Panc1 (cell line): ENCODE measurements at regions of chrX and their contacts with region 1.

Region 1: DNA sequence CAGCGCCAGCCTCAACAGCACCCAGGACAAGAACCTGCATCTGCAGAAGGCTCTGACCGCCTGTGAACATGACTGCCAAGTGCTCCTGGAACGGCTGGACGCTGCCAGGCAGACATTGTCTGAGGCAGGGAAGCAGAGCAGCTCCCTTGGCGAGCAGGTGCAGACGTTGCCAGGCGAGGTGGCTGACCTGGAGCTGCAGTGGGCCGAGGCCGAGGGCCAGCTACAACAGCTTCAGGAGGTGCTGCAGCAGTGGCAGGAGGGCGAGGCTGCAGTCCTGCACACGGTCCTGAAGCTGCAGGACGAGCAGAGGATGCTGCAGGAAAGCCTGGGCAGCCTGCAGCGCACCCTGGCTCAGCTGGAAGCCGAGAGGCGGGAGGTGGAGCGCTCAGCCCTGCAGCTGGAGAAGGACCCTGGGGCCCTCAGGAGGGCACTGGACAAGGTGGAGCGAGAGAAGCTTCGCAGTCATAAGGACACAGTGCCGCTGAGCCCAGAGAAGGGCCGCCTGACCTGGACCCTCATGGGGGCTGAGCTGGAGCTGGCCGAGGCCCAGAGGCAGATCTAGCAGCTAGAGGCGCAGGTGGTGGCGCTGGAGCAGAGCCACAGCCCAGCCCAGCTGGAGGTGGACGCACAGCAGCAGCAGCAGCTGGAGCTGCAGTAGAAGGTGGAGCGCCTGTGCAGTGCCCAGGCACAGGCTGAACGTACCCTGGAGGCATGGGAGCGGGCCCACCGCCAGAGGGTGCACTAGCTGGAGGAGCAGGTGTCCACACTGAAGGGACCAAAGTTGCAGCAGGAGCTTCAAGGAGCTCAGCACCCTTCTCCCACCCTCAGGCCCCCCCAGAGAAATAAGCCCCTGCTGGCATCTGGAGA is 16.4 kb downstream of the SMIM10L2A start:
- DNase-seq: no peak
- ATAC-seq: peak; percentile 85
- H3K4me3 ChIP-seq: no peak overlapping the region
- H3K27ac ChIP-seq: no peak overlapping the region
- H3K4me1 ChIP-seq: no peaks in the 10 kb centered on the region
- H3K27me3 ChIP-seq: no peaks in the 10 kb centered on the region
- CTCF ChIP-seq: peak; percentile 59

Region 2: DNA sequence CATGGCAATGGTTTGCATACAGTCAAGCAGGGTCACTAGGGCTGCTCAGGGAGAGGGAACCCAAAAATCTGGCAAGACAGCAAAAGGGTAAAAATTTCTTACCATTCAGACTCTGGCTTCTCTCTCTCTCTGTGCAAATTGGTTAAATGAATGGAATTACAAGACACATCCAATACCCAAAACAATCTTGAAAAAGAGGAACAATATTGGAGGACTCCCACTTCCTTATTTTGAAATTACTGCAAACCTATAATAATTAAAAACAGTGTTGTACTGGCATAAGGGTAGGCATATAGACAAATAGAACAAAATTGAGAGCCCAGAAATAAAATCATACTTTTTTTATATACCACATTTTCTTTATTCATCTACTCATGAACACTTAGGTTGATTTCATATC is 162.1 kb before region 1 on chrX:
- CTCF ChIA-PET with region 1: no interaction called
- POLR2A ChIA-PET with region 1: no interaction called
- in situ Hi-C with region 1: no loop called
- intact Hi-C with region 1: loop called (anchors 5 kb)
- DNase-seq: no peak
- ATAC-seq: no peak
- H3K4me3 ChIP-seq: no peak overlapping the region
- H3K27ac ChIP-seq: no peak overlapping the region
- H3K4me1 ChIP-seq: no peaks in the 10 kb centered on the region
- H3K27me3 ChIP-seq: no peaks in the 10 kb centered on the region
- CTCF ChIP-seq: no peak